Psoas muscle (tissue), 8 donors: ENCODE measurements at regions of chr17 and their contacts with region 1.

Region 1: GRCh38 chr17:903981-904481 is 75.5 kb downstream of the NXN start:
- DNase-seq: no peak
- ATAC-seq: no peak
- H3K4me3 ChIP-seq: no peak overlapping the region
- H3K27ac ChIP-seq: peak overlapping the region; percentile 27
- H3K4me1 ChIP-seq: peaks cover 28% of the 10 kb centered on the region
- H3K27me3 ChIP-seq: no peaks in the 10 kb centered on the region
- CTCF ChIP-seq: no peak

Region 2: GRCh38 chr17:859061-859823 is 44.8 kb before region 1 on chr17:
- intact Hi-C with region 1: no loop called
- DNase-seq: peak; percentile 41 to 76
- ATAC-seq: peak; percentile 59 to 86 (median 78)
- H3K4me3 ChIP-seq: peak overlapping the region; percentile 37
- H3K27ac ChIP-seq: peak overlapping the region; percentile 84
- H3K4me1 ChIP-seq: peaks cover 27% of the 10 kb centered on the region
- H3K27me3 ChIP-seq: no peaks in the 10 kb centered on the region
- CTCF ChIP-seq: no peak

Region 3: DNA sequence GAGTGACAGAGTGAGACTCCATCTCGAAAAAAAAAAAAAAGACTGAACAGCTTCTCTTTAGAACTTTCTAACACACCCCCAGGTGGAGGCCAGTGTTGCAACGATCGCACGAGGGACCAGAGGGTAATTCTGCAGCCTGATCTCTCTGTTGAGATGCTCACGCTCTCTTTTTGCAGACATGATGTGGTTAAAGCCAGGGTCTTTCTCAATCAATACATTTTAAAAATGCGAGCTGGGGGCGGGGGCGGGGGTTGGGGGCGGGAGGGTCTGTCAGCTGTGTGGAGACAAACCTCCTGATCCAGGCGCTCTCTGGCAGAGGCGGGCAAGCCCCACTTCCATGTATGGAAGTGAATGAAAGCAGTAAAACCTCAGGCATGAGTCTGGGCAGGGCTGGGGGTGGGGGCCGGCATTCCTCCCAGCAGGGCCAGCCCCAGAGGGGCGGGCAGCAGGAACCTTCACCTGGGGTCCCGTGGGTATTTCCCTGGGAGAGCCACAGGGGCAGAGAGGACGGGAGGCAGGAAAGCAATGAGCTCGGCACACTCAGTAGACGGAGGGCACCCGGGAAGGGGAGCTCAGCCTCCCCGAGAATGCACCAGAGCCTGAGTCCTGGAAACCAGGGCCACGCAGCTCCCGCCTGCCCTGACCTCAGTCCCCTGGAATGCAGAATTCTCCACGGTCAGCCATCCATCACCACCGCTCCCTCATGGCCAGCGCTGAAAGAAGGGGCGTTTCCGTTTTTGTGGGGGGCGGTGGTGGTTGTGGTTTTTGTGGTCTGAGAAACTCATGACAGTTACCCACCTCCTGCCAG is 47.5 kb after region 1 on chr17:
- intact Hi-C with region 1: loop called in 1 of 2 experiments (anchors 10 kb)
- DNase-seq: peak in 1 of 2 donors; percentile 40
- ATAC-seq: peak; percentile 48 to 80 (median 60)
- H3K4me3 ChIP-seq: peak overlapping the region; percentile 25
- H3K27ac ChIP-seq: peak overlapping the region; percentile 41
- H3K4me1 ChIP-seq: peaks cover 33% of the 10 kb centered on the region
- H3K27me3 ChIP-seq: no peaks in the 10 kb centered on the region
- CTCF ChIP-seq: no peak

Region 4: GRCh38 chr17:979538-980405 is 75.7 kb after region 1 on chr17 and contains the start of gene NXN:
- intact Hi-C with region 1: loop called (anchors 5 kb)
- DNase-seq: peak; percentile 87 to 95
- ATAC-seq: peak; percentile 83 to 95 (median 92)
- H3K4me3 ChIP-seq: peak within 1 kb of the TSS; percentile 87
- H3K27ac ChIP-seq: peak within 1 kb of the TSS; percentile 86
- H3K4me1 ChIP-seq: peaks cover 41% of the 10 kb centered on the region
- H3K27me3 ChIP-seq: no peaks in the 10 kb centered on the region
- CTCF ChIP-seq: peak; percentile 33
- total RNA-seq, gene NXN: 72.8 to 79.4 (median 74.1) TPM